SK-N-SH (cell line): ENCODE measurements at regions of chr3 and their contacts with region 1.

Region 1: GRCh38 chr3:128680602-128681368 is 30.2 kb upstream of the RPN1 start:
- DNase-seq: peak; percentile 98
- H3K4me3 ChIP-seq: peak overlapping the region; percentile 57 to 58
- H3K27ac ChIP-seq: peak overlapping the region; percentile 84 to 99
- H3K4me1 ChIP-seq: peaks cover 5% of the 10 kb centered on the region in 2 experiments; a peak in 2 of 4 replicates
- H3K27me3 ChIP-seq: no peaks in the 10 kb centered on the region
- CTCF ChIP-seq: peak; percentile 94
- EP300 ChIP-seq: no peak; a peak in 1 of 4 replicates
- RAD21 ChIP-seq: peak; percentile 80

Region 2: DNA sequence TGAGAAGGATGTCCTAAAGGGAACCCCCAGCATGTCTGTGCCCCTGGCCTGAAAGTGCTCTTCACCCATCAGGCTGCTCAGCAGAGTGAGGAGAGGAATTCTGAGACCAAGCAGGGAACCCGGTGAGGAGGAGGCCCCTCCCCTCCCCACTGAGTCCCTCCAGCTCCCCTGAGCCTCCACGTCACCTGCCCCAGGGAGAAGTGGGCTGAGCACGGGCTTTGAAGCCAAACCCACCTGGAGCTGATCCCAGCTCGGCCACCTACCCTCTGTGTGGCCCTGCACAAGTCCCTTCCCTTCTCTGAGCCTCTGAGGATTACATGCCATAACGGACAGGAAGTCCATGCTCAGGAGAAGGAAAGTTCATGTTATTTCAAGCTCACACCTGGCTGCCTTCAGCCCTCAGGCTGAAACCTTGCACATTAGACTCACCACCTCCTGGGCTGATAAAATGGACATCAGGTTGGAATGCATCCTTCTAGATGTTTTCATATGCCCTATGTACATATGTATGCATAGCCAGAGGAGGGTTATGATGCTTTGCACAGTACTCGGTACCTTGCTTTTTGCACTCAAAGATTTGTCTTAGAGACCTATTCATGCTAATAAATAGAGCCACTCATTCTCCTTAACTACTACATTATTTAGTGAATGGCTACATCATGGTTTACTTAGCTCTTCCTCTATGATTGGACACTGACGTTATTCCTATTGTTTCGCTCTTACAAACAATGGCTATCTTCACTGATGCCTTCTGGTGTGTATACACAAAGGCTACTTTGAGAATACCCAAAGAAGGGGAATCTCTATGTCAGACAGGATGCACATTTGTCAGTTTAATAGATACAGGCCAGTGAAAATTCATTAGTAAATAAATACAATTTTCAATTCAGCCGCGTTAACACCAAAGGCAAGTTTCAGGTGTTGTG is 156.1 kb before region 1 on chr3:
- CTCF ChIA-PET with region 1: no interaction called
- POLR2A ChIA-PET with region 1: no interaction called
- DNase-seq: no peak
- H3K4me3 ChIP-seq: no peak overlapping the region
- H3K27ac ChIP-seq: no peak overlapping the region
- H3K4me1 ChIP-seq: no peaks in the 10 kb centered on the region
- H3K27me3 ChIP-seq: peaks cover 7% of the 10 kb centered on the region; the same call in 1 of the 2 replicates
- CTCF ChIP-seq: no peak
- EP300 ChIP-seq: no peak
- RAD21 ChIP-seq: no peak

Region 3: GRCh38 chr3:128665362-128666038 is 15.3 kb before region 1 on chr3:
- CTCF ChIA-PET with region 1: interaction called, 14 read pairs
- POLR2A ChIA-PET with region 1: interaction called, 4 read pairs
- DNase-seq: peak; percentile 40
- H3K4me3 ChIP-seq: no peak overlapping the region
- H3K27ac ChIP-seq: no peak overlapping the region
- H3K4me1 ChIP-seq: no peaks in the 10 kb centered on the region
- H3K27me3 ChIP-seq: no peaks in the 10 kb centered on the region
- CTCF ChIP-seq: no peak
- EP300 ChIP-seq: no peak
- RAD21 ChIP-seq: peak; percentile 42

Region 4: GRCh38 chr3:128740621-128741020 is 59.8 kb after region 1 on chr3:
- CTCF ChIA-PET with region 1: interaction called, 11 read pairs
- POLR2A ChIA-PET with region 1: no interaction called
- DNase-seq: no peak
- H3K4me3 ChIP-seq: no peak overlapping the region
- H3K27ac ChIP-seq: no peak overlapping the region
- H3K4me1 ChIP-seq: no peaks in the 10 kb centered on the region
- H3K27me3 ChIP-seq: no peaks in the 10 kb centered on the region
- CTCF ChIP-seq: no peak
- EP300 ChIP-seq: no peak
- RAD21 ChIP-seq: no peak

Region 5: GRCh38 chr3:128787256-128788240 is 106.8 kb after region 1 on chr3:
- CTCF ChIA-PET with region 1: interaction called, 112 read pairs
- POLR2A ChIA-PET with region 1: no interaction called
- DNase-seq: peak; percentile 47
- H3K4me3 ChIP-seq: no peak overlapping the region
- H3K27ac ChIP-seq: no peak overlapping the region
- H3K4me1 ChIP-seq: peaks cover 7 to 19% of the 10 kb centered on the region in 2 experiments; a peak in 2 of 4 replicates
- H3K27me3 ChIP-seq: no peaks in the 10 kb centered on the region
- CTCF ChIP-seq: peak; percentile 41
- EP300 ChIP-seq: no peak
- RAD21 ChIP-seq: no peak

Region 6: DNA sequence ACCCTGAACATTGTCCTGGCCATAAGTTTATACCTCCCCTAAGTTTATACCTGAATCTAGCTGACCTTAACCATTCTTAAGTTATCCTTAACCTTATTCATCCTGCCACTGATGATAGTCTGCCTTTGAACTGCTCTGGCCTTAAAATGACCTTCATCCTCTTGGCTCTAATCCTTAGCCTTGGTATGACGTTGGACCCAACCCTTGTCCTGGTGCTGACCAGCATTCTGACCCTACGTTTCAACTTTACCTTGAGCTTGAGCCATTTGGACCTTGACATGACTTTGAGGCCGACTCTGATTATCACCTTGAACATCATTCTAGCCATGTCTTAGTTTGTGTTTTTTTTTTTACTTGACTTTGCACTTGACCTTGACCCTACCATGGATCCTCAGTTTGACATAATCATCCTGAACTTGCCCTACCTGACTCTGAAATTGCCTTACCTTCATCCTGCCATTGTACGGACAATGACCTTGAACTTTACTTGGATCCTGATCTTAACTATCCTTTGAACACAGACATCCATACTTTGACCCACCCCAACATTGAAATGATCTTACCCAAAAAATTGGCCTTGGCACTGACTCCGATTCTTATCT is 137.5 kb after region 1 on chr3:
- CTCF ChIA-PET with region 1: interaction called, 10 read pairs
- POLR2A ChIA-PET with region 1: no interaction called
- DNase-seq: no peak
- H3K4me3 ChIP-seq: no peak overlapping the region
- H3K27ac ChIP-seq: no peak overlapping the region
- H3K4me1 ChIP-seq: no peaks in the 10 kb centered on the region
- H3K27me3 ChIP-seq: no peaks in the 10 kb centered on the region
- CTCF ChIP-seq: no peak
- EP300 ChIP-seq: no peak
- RAD21 ChIP-seq: no peak

Region 7: DNA sequence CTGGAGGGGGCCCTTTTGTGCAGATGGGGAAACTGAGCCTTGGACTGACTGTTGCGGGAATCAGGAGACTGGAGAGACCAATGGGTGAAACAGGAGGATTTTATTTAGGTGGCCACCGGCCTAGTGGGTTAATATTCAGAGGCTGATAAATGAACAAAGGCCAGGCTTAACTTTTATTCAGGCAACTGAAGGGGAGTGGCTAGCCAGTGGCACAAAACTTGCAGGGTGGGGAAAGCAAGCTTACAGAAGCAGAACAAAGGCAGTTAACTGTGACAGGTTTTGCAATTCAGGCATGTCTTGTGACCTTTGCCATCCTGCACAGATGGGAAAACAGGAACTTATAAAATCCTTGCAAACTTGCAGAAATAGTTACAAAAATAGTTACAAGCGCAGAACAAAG is 173.7 kb after region 1 on chr3:
- CTCF ChIA-PET with region 1: interaction called, 10 read pairs
- POLR2A ChIA-PET with region 1: no interaction called
- DNase-seq: no peak
- H3K4me3 ChIP-seq: no peak overlapping the region
- H3K27ac ChIP-seq: no peak overlapping the region
- H3K4me1 ChIP-seq: peaks cover 0 to 12% of the 10 kb centered on the region in 2 experiments; a peak in 1 of 4 replicates
- H3K27me3 ChIP-seq: no peaks in the 10 kb centered on the region
- CTCF ChIP-seq: no peak
- EP300 ChIP-seq: no peak
- RAD21 ChIP-seq: no peak